ENCODE measurements at regions of chr3 and their contacts with region 1.

Region 1: DNA sequence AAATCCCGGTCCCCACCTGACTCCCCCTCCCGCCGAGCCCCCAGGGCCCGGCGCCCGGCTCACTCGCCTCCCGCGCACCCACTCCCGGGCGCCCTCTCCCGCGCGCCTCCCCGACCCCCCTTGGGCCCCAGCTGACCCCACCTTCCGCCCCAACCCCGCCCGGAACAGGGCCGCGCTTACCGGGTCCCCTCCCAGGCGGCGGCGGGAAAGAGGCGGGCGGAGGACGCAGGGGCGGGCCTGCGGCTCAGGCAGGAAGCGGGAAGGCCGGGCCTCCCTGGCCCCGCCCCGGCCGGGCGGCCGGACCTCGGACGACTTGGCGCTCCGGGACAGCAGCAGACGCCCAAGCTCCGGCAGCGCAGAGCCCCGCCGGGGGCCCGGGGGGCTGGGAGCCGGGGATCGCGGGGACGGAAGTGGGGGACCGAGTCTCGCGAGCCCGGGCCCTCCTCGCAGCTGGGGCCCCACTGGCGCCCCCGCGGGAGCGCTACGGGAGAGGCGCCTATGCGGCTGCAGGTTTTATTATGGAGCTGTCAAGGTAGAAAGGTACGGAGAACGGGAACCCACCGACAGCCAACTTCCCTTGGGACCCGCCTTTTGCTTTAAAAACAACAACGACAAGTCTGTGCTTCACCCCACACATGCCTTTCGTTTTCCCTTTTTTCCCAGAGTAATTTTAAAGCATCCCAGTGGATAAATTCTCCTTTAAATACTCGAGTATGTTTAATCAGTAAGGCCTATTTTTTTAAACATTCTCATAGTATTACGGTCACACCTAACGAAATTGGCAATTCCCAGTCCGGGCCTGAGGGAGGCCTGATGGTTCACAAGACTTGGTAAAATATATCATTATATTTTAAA is at the start of gene SLC41A3:
- DNase-seq: peak; percentile 58 to 95
- H3K4me3 ChIP-seq: peak within 1 kb of the TSS; percentile 79 to 85
- H3K27ac ChIP-seq: peak within 1 kb of the TSS; percentile 93 to 94
- H3K4me1 ChIP-seq: peaks cover 0 to 4% of the 10 kb centered on the region in 2 donors
- H3K27me3 ChIP-seq: no peaks in the 10 kb centered on the region
- CTCF ChIP-seq: peak; percentile 33 to 49 (median 38)
- total RNA-seq, gene SLC41A3: 111 TPM

Region 2: DNA sequence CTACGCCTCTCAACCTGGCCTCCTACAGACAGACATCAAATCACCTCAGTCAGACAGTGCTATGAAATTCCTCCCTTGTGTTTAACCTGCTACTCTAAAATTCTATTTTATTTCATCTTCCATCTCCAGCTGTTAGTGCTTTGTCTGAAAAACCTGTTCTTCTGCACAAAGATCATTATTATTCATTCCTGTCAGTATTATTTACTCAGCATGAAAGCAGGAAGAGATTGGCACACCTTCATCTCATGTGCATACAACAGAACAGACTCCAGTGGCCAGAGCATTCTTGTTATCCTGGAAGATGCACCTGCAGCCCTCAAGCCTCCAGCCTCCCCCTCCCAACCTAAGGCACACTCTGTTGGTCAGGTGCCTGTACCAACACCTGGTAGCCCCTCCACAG is 117.0 kb before region 1 on chr3:
- intact Hi-C with region 1: loop called (anchors 5 kb)
- DNase-seq: no peak
- H3K4me3 ChIP-seq: no peak overlapping the region
- H3K27ac ChIP-seq: no peak overlapping the region
- H3K4me1 ChIP-seq: peaks cover 3% of the 10 kb centered on the region in 2 donors
- H3K27me3 ChIP-seq: no peaks in the 10 kb centered on the region
- CTCF ChIP-seq: no peak

Region 3: GRCh38 chr3:125990253-125990970 is 93.7 kb before region 1 on chr3:
- intact Hi-C with region 1: loop called (anchors 5 kb)
- DNase-seq: peak; percentile 66 to 96
- H3K4me3 ChIP-seq: peak overlapping the region; percentile 65 to 82
- H3K27ac ChIP-seq: peak overlapping the region; percentile 83 to 86
- H3K4me1 ChIP-seq: peaks cover 0 to 7% of the 10 kb centered on the region in 2 donors
- H3K27me3 ChIP-seq: no peaks in the 10 kb centered on the region
- CTCF ChIP-seq: no peak

Region 4: GRCh38 chr3:126100634-126101301 is 16.6 kb after region 1 on chr3:
- intact Hi-C with region 1: loop called (anchors 1 kb)
- DNase-seq: peak in 1 of 2 donors; percentile 86
- H3K4me3 ChIP-seq: peak overlapping the region in 1 of 2 donors; percentile 48
- H3K27ac ChIP-seq: peak overlapping the region; percentile 96 to 98
- H3K4me1 ChIP-seq: peaks cover 24 to 46% of the 10 kb centered on the region in 2 donors
- H3K27me3 ChIP-seq: no peaks in the 10 kb centered on the region
- CTCF ChIP-seq: no peak

Region 5: DNA sequence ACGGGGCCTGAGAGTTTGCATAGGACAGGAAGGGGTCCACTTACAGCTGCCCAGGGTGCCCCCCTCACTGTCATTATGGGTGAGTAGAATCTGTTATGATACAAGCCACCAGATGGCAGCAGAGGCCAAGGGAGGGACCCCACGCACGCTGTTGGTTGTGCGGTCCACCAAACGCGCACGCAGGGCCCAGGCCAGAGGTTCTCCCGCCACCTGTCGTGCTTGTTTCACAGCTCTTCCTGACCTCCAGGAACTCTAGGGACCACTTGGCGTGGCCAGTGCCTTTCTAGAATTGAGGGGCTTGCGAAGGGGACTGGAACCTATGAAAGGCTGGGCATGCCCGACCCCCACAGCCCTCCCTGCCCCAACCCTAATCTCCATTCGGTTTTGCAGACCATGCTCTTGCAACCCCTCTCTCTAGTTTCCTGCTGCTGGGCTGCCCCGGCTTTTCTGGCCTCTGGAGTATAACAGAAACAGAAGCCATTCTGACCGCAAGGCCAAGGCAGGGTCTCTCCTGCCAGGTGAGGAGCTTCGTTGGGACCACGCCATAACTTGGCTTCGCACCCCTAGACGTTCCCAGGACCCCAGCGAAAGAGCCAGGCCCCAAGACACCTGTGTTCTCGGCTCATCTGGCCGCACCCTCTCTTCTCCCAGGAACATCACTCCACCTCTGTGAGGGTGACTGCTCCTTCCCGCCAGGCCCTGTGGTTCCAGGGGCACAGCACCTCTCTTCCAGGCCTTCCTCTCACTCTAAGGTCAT is 50.3 kb after region 1 on chr3:
- intact Hi-C with region 1: no loop called
- DNase-seq: peak in 1 of 2 donors; percentile 80
- H3K4me3 ChIP-seq: no peak overlapping the region
- H3K27ac ChIP-seq: no peak overlapping the region
- H3K4me1 ChIP-seq: no peaks in the 10 kb centered on the region
- H3K27me3 ChIP-seq: no peaks in the 10 kb centered on the region
- CTCF ChIP-seq: peak; percentile 80 to 87 (median 81)

Measured in ascending aorta (tissue), 2 donors.